Endothelial cell of umbilical vein (primary cell): ENCODE measurements at regions of chr14 and their contacts with region 1.

Region 1: DNA sequence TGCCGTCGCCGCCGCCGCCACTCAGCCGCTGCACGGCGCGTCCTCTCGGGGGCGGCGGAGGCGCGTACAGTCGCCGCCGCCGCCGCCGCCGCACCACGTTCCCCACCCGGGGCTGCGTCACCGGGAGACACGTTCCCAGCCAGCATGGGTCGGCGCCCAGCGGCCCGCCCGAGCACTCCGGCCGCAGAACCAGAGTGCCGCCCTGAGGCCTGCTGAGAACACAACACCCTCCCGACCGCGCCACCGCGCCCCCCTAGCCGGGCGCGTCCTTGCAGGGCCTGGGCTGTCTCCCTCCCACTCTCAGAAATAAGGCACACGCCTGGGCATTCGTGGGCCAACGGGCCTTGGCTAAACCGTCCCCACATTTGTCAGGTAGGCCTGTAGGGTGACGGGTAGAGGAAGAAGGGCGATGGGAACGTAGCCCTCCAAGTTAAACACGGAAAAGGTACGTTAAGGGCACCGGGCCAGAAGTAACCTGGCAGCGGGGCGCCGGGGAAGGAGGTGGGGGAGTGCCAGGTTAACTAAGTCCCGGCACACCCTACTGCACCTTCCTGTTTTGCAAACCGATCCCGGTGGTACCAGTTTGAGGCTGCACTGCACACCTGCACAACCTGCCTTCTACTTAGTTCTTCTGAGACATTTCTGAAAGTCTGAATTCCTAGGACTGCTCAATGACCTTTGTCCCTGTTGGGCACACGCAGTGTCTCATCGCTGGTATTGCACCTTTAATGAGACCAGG is at the start of gene MAP4K5:
- DNase-seq: peak; percentile 90
- H3K4me3 ChIP-seq: peak within 1 kb of the TSS; percentile 90 to 98 (median 97)
- H3K27ac ChIP-seq: peak within 1 kb of the TSS; percentile 82
- H3K4me1 ChIP-seq: peaks cover 38% of the 10 kb centered on the region
- H3K27me3 ChIP-seq: no peaks in the 10 kb centered on the region
- CTCF ChIP-seq: peak; percentile 95 to 96
- POLR2A ChIP-seq: peak; percentile 68
- total RNA-seq, gene MAP4K5: 60.1 and 73.7 TPM in 2 replicates

Region 2: DNA sequence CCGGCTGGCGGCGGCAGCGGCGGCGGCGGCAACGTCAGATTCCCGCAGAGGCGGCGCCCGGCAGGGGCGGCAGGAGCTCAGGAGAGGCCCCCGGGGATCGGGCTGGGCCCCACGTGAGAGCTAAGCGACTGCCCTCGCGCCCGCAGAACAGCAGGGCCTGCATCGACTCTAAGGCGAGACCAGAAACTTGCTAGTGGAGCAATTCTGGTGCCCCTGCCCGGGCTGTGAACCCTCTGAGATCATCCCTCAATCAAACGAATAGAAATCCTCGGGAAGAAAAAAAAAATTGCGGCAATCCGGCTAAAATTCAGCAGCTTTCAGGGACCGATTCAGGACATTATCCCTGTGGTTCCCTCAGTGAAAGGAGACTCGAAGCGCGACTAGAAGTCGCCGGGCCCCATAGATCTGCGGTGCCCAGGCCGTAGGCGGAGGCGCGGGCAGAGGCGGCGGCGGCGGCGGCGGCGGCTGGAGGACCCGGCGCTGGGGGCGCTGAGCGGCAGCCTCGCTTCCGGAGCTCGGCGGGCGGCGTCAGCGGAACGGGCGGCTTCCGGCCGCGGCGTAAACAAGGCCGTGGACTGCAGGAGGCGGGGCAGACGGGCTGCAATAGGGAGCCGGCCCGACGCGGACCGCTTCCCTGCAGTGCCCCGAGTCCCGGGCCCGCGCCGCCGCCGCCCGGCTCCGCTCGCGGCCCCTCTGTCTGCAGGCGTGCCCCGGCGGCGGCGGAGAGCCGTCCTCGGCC is 764.9 kb before region 1 on chr14 and contains the start of gene KLHDC2:
- CTCF ChIA-PET with region 1: no interaction called
- POLR2A ChIA-PET with region 1: no interaction called
- dilution Hi-C with region 1: no loop called
- intact Hi-C with region 1: loop called (anchors 5 kb)
- DNase-seq: peak; percentile 88
- H3K4me3 ChIP-seq: peak within 1 kb of the TSS; percentile 68 to 86 (median 75)
- H3K27ac ChIP-seq: peak within 1 kb of the TSS; percentile 86
- H3K4me1 ChIP-seq: peaks cover 16% of the 10 kb centered on the region
- H3K27me3 ChIP-seq: no peaks in the 10 kb centered on the region
- CTCF ChIP-seq: peak in 1 of 2 donors; percentile 34
- POLR2A ChIP-seq: peak; percentile 81
- total RNA-seq, gene KLHDC2: 29.2 and 30.2 TPM in 2 replicates

Region 3: GRCh38 chr14:50116181-50116956 is 416.3 kb before region 1 on chr14 and contains the start of gene VCPKMT:
- CTCF ChIA-PET with region 1: no interaction called
- POLR2A ChIA-PET with region 1: no interaction called
- dilution Hi-C with region 1: no loop called
- intact Hi-C with region 1: loop called (anchors 1 kb)
- DNase-seq: peak; percentile 95
- H3K4me3 ChIP-seq: peak within 1 kb of the TSS; percentile 72 to 99 (median 78)
- H3K27ac ChIP-seq: peak within 1 kb of the TSS; percentile 73
- H3K4me1 ChIP-seq: peaks cover 17% of the 10 kb centered on the region
- H3K27me3 ChIP-seq: no peaks in the 10 kb centered on the region
- CTCF ChIP-seq: no peak
- POLR2A ChIP-seq: peak; percentile 93
- total RNA-seq, gene VCPKMT: 6.9 and 9.2 TPM in 2 replicates

Region 4: DNA sequence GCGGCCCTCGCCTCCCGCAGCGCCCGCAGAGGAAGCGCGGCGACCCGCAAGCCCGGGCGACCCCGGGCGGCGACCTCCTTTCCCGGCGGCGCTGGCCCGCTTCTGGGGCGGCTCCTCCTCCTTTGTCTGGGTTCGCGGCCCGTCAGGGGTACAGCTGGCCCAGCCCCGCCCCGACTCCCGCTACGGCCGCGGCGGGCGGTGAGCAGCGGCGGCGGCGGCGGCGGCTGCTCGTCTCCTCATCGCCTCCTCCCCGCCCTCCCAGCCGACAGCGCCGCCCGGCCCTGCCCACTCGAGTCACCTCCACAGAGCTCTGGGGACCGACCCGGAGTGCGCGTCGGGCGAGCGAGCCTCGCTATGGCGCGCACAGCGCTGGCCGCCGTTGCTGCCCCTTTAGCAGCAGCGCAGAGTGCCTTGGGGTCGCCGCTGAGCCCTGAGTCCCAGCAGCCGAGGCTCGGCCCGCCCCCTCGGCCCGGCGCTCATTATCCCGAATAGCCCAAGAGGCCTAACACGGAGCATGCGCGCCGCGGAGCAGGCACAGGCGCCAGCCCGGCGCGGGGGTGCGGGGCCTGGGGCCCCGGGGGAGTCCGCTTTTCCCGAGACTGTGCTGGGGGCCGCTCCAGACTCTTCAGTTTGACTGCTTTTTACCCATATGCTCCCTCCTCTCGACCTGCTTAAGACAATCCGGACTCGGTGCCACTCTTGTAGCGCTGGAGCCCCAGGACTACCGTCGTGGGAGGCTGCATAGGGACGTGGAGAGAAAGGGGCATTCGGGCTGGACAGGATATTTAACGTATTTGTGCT is 301.0 kb before region 1 on chr14 and contains the start of gene SOS2:
- CTCF ChIA-PET with region 1: no interaction called
- POLR2A ChIA-PET with region 1: no interaction called
- dilution Hi-C with region 1: no loop called
- intact Hi-C with region 1: loop called (anchors 2 kb)
- DNase-seq: peak; percentile 91
- H3K4me3 ChIP-seq: peak within 1 kb of the TSS; percentile 92 to 99 (median 98)
- H3K27ac ChIP-seq: peak within 1 kb of the TSS; percentile 88
- H3K4me1 ChIP-seq: peaks cover 18% of the 10 kb centered on the region
- H3K27me3 ChIP-seq: no peaks in the 10 kb centered on the region
- CTCF ChIP-seq: no peak
- POLR2A ChIP-seq: peak; percentile 83
- total RNA-seq, gene SOS2: 21.3 and 23.7 TPM in 2 replicates

Region 5: GRCh38 chr14:50321009-50321660 is 211.5 kb before region 1 on chr14:
- CTCF ChIA-PET with region 1: interaction called, 44 read pairs
- POLR2A ChIA-PET with region 1: no interaction called
- dilution Hi-C with region 1: no loop called
- intact Hi-C with region 1: loop called (anchors 1 kb)
- DNase-seq: peak; percentile 96
- H3K4me3 ChIP-seq: peak overlapping the region in 2 of 3 experiments; percentile 11 to 53
- H3K27ac ChIP-seq: peak overlapping the region; percentile 88
- H3K4me1 ChIP-seq: peaks cover 8% of the 10 kb centered on the region
- H3K27me3 ChIP-seq: no peaks in the 10 kb centered on the region
- CTCF ChIP-seq: peak; percentile 86 to 87
- POLR2A ChIP-seq: no peak

Region 6: GRCh38 chr14:50396631-50397390 is 135.9 kb before region 1 on chr14 and contains the start of gene CDKL1:
- CTCF ChIA-PET with region 1: no interaction called
- POLR2A ChIA-PET with region 1: no interaction called
- dilution Hi-C with region 1: no loop called
- intact Hi-C with region 1: loop called (anchors 1 kb)
- DNase-seq: peak; percentile 75
- H3K4me3 ChIP-seq: peak within 1 kb of the TSS; percentile 72 to 97 (median 88)
- H3K27ac ChIP-seq: peak within 1 kb of the TSS; percentile 48
- H3K4me1 ChIP-seq: peaks cover 15% of the 10 kb centered on the region
- H3K27me3 ChIP-seq: no peaks in the 10 kb centered on the region
- CTCF ChIP-seq: no peak
- POLR2A ChIP-seq: peak; percentile 60
- total RNA-seq, gene CDKL1: 9.7 and 14.2 TPM in 2 replicates

Region 7: GRCh38 chr14:50475462-50475861 is 57.2 kb before region 1 on chr14:
- CTCF ChIA-PET with region 1: no interaction called
- POLR2A ChIA-PET with region 1: no interaction called
- dilution Hi-C with region 1: no loop called
- intact Hi-C with region 1: no loop called
- DNase-seq: no peak
- H3K4me3 ChIP-seq: no peak overlapping the region
- H3K27ac ChIP-seq: no peak overlapping the region
- H3K4me1 ChIP-seq: no peaks in the 10 kb centered on the region
- H3K27me3 ChIP-seq: no peaks in the 10 kb centered on the region
- CTCF ChIP-seq: no peak
- POLR2A ChIP-seq: no peak